Prostate gland (tissue), 2 donors: ENCODE measurements at regions of chr9 and their contacts with region 1.

Region 1: GRCh38 chr9:70111042-70111602 is 67.5 kb downstream of the MAMDC2 start:
- DNase-seq: peak; percentile 62
- H3K4me3 ChIP-seq: no peak overlapping the region
- H3K27ac ChIP-seq: no peak overlapping the region
- H3K4me1 ChIP-seq: no peaks in the 10 kb centered on the region
- H3K27me3 ChIP-seq: no peaks in the 10 kb centered on the region
- CTCF ChIP-seq: peak; percentile 60 to 84 (median 82)
- POLR2A ChIP-seq: no peak

Region 2: DNA sequence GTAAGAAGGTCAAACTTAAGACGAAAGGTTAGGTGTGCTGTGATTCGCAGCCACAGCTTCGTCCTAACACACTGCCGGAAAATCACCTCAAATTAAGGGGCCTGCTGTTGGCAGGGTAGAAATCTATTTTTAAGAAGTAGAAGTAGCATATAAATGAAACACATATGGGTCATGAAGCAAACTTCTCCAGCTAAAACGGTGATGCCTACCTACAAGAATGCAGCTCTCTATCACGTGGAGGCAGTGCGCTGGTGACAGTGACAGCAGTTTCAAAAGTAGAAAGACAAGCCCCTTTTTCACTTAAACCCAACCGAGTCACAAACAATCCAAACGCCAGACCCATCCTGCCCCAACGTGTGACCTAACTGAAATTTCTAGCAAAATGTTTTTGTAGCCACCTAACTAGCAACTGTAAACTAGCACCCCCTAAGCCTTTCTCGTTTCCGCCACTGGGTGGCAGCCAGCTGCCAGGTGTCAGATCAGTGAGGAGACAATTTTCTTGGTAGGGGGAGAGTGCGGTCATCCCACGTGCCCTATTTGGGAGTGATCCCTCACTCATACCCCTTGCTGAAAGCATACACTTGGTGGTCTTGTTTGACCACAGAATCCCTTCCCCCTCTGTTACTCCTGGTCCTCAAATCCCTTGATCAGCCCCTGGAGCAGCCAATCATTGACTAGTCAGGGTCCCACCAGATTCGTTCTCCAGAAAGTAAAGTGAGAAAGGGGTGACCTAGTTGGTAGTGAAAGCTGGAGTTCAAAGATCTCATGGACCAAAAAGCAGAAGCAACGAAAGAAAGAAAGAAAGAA is 139.3 kb before region 1 on chr9:
- intact Hi-C with region 1: loop called (anchors 1 kb)
- DNase-seq: peak; percentile 58
- H3K4me3 ChIP-seq: no peak overlapping the region
- H3K27ac ChIP-seq: no peak overlapping the region
- H3K4me1 ChIP-seq: no peaks in the 10 kb centered on the region
- H3K27me3 ChIP-seq: no peaks in the 10 kb centered on the region
- CTCF ChIP-seq: peak; percentile 65 to 79 (median 76)
- POLR2A ChIP-seq: no peak

Region 3: GRCh38 chr9:70065572-70065971 is 45.5 kb before region 1 on chr9:
- intact Hi-C with region 1: loop called (anchors 5 kb)
- DNase-seq: no peak
- H3K4me3 ChIP-seq: no peak overlapping the region
- H3K27ac ChIP-seq: no peak overlapping the region
- H3K4me1 ChIP-seq: no peaks in the 10 kb centered on the region
- H3K27me3 ChIP-seq: no peaks in the 10 kb centered on the region
- CTCF ChIP-seq: no peak
- POLR2A ChIP-seq: no peak

Region 4: GRCh38 chr9:70340572-70340971 is 229.4 kb after region 1 on chr9:
- intact Hi-C with region 1: loop called (anchors 10 kb)
- DNase-seq: no peak
- H3K4me3 ChIP-seq: no peak overlapping the region
- H3K27ac ChIP-seq: no peak overlapping the region
- H3K4me1 ChIP-seq: no peaks in the 10 kb centered on the region
- H3K27me3 ChIP-seq: no peaks in the 10 kb centered on the region
- CTCF ChIP-seq: peak; percentile 47 to 59 (median 52)
- POLR2A ChIP-seq: no peak